ENCODE measurements at regions of chr6 and their contacts with region 1.

Region 1: GRCh38 chr6:30091577-30092381 is 16.2 kb upstream of the RNF39 start:
- DNase-seq: peak; percentile 79
- H3K4me3 Mint-ChIP-seq: no peak overlapping the region
- H3K27ac Mint-ChIP-seq: peak overlapping the region; percentile 67
- H3K4me1 Mint-ChIP-seq: peaks cover 25% of the 10 kb centered on the region
- H3K27me3 Mint-ChIP-seq: no peaks in the 10 kb centered on the region
- CTCF ChIP-seq: no peak

Region 2: DNA sequence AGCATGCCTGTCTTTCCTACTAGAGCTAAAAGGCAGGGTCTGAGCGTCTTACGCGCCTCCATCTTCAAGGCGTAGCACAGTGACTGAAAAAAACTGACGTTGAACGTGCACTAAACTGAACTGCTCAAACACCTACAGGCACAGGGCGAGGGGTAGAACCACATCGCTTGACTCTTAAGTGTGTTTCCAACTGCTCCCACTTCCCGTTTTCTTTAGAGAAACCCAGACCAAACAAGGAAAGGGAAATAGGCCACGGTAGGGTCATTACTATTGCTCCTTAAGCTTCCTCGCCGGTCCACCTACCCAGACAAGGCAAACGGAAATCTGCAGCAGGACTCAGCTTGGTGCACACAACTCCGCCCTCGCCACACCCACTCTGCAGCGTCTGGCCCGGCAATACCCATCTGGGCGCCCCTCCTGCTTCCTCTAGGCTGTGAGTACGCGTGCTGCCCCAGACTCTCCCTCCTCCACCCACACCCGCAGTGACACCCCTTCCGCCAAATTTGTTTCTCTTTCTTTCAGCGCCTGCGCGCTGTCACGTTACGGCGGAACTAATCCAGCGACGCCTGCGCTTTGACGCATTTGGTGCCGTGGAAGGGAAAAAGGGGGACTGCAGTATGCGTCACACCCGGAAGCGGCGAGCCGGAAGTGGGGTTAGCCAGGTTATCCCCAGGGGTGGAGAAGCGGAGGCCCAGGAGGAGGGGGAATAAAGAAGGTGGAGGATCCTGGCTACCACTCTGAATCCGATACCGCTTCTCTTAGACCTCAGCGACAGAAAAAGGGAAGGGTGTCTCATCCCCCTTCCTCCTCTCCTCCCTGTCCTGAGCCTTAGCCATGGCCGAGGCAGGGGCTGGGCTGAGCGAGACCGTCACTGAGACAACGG is 25.0 kb before region 1 on chr6 and contains the start of gene PPP1R11:
- CTCF ChIA-PET with region 1: no interaction called
- POLR2A ChIA-PET with region 1: interaction called, 16 read pairs
- intact Hi-C with region 1: no loop called
- DNase-seq: peak; percentile 99
- H3K4me3 Mint-ChIP-seq: peak within 1 kb of the TSS; percentile 79
- H3K27ac Mint-ChIP-seq: peak within 1 kb of the TSS; percentile 99
- H3K4me1 Mint-ChIP-seq: peaks cover 42% of the 10 kb centered on the region
- H3K27me3 Mint-ChIP-seq: no peaks in the 10 kb centered on the region
- CTCF ChIP-seq: no peak
- total RNA-seq, gene PPP1R11: 60.1 and 82.2 TPM in 2 replicates

Region 3: DNA sequence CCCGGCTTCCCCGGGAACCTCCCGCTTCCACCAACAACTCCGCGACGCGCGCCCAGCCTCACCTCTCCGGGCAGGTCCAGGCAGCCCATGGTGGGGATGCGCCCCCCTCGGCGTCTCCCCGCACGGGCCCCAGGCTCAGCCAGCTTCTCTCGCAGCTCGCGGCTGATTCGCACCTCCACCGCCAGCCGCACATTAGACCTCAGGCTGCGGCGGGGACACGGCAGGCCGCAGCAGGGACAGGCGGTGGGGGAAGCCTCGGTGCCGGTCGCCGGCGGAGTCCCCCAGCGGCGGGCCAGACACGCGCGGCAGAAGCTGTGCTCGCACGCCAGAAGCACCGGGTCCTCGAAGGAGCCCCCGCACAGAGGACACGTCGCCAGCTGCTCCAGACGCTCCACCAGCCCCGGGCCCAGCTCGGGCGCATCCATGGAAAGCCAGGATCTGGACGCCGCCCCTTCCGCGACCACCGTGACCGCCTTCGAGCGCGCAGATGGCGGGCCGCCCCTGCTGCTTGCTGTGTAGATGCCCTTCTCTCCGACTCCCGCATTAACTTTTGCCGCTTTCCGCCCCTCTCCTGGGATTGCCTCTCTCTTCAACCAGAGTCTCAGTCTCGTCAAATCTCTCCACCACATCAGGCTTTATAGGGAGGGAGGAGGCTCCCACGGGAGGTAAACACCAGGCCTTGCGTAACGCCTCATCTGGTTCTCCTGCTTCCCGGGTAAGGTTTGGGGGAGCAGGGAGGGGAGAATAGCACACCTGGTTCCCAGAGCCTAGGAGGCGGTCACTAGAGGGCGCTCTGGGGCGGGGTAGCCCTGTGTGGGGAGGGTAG is 16.4 kb before region 1 on chr6 and contains the start of gene RNF39:
- CTCF ChIA-PET with region 1: interaction called, 4 read pairs
- POLR2A ChIA-PET with region 1: interaction called, 77 read pairs
- intact Hi-C with region 1: no loop called
- DNase-seq: no peak
- H3K4me3 Mint-ChIP-seq: peak within 1 kb of the TSS; percentile 84
- H3K27ac Mint-ChIP-seq: peak within 1 kb of the TSS; percentile 85
- H3K4me1 Mint-ChIP-seq: peaks cover 39% of the 10 kb centered on the region
- H3K27me3 Mint-ChIP-seq: no peaks in the 10 kb centered on the region
- CTCF ChIP-seq: peak; percentile 57
- total RNA-seq, gene RNF39: 2.3 and 3.6 TPM in 2 replicates

Region 4: GRCh38 chr6:30263734-30264133 is 172.0 kb after region 1 on chr6:
- CTCF ChIA-PET with region 1: no interaction called
- POLR2A ChIA-PET with region 1: no interaction called
- intact Hi-C with region 1: no loop called
- DNase-seq: peak; percentile 57
- H3K4me3 Mint-ChIP-seq: no peak overlapping the region
- H3K27ac Mint-ChIP-seq: no peak overlapping the region
- H3K4me1 Mint-ChIP-seq: peaks cover 14% of the 10 kb centered on the region
- H3K27me3 Mint-ChIP-seq: no peaks in the 10 kb centered on the region
- CTCF ChIP-seq: no peak